MCF 10A (cell line): ENCODE measurements at regions of chr13 and their contacts with region 1.

Region 1: GRCh38 chr13:111228262-111229144 is 91.9 kb upstream of the TEX29 start:
- DNase-seq: no peak
- H3K4me3 Mint-ChIP-seq: no peak overlapping the region
- H3K27ac Mint-ChIP-seq: no peak overlapping the region
- H3K4me1 Mint-ChIP-seq: no peaks in the 10 kb centered on the region
- H3K27me3 Mint-ChIP-seq: no peaks in the 10 kb centered on the region
- CTCF ChIP-seq: no peak

Region 2: DNA sequence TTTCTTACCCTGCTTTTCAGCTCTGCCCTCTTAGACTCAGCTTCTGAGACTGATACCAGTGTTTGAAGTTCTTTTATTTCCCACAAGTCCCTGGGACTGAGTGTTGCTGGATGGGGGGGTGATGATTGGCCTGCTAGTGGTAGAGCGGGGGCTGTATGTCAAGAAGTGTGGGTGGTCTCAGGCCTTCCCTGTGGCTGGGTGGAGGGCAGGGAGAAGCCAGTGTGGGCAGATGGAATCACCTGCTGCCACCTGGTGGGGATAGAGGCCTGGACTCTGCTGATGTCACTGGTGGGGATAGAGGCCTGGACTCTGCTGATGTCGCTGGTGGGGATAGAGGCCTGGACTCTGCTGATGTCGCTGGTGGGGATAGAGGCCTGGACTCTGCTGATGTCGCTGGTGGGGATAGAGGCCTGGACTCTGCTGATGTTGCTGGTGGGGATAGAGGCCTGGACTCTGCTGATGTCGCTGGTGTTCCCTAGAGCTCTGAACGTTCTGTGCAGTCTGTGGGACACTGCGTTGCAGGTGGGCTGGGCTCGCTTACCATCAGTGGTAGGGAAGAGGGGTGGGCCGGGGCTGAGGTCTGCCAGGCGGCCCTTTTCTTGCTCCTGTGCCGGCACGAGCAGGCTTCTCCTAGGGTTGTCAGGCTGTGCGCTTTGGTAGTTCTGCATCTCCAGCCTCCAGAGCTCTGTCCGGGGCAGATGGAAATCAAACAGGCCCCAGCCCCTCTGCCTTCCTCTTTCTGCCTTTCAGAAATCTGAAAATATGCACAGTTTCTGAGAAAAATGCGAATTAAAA is 12.1 kb before region 1 on chr13:
- CTCF ChIA-PET with region 1: interaction called, 14 read pairs
- POLR2A ChIA-PET with region 1: interaction called, 3 read pairs
- intact Hi-C with region 1: no loop called
- DNase-seq: peak; percentile 30
- H3K4me3 Mint-ChIP-seq: no peak overlapping the region
- H3K27ac Mint-ChIP-seq: no peak overlapping the region
- H3K4me1 Mint-ChIP-seq: peaks cover 12% of the 10 kb centered on the region
- H3K27me3 Mint-ChIP-seq: no peaks in the 10 kb centered on the region
- CTCF ChIP-seq: peak; percentile 39

Region 3: GRCh38 chr13:112606109-112607001 is 1377.9 kb after region 1 on chr13:
- CTCF ChIA-PET with region 1: no interaction called
- POLR2A ChIA-PET with region 1: no interaction called
- intact Hi-C with region 1: loop called (anchors 10 kb)
- DNase-seq: peak; percentile 83
- H3K4me3 Mint-ChIP-seq: peak overlapping the region; percentile 74
- H3K27ac Mint-ChIP-seq: no peak overlapping the region
- H3K4me1 Mint-ChIP-seq: peaks cover 4% of the 10 kb centered on the region
- H3K27me3 Mint-ChIP-seq: peaks cover 65% of the 10 kb centered on the region
- CTCF ChIP-seq: peak; percentile 78